CD8-positive, alpha-beta T cell (primary cell): ENCODE measurements at regions of chr6 and their contacts with region 1.

Region 1: DNA sequence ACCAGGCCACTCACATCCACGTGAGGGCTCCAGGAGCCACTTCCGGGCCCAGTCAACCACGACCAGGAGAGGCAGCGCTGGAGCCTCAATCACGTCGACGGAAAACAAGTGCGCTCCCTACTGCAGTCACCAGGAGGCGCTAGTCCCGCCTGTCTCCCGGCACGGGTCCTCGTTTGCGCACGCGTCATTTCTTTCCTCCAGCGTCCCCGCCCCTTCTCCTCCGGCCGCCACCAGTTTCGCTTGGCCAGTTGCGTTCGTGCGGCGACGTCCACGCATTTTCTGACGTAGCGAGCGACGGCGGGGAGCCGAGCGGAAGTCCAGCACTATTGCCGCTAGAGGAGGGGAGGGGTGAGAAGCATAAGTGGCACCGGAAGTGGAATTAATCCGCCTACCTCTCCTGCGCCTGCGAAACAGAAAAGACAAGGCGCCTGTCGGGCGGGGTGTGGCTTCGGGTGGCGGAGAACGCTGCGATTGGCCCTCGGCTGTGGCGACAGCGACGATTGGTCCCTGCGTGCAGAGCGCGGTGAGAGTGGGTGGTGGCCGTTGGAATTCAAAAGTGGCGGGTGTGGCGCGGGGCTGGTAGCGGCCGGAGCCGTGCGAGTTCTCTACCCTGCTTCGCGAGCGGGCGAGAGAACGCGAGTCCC is at the start of gene KIFC1:
- DNase-seq: peak; percentile 98 to 100 (median 99)
- ATAC-seq: peak; percentile 87
- H3K4me3 ChIP-seq: peak within 1 kb of the TSS; percentile 57 to 61
- H3K4me3 Mint-ChIP-seq: peak within 1 kb of the TSS; percentile 85
- H3K27ac ChIP-seq: peak within 1 kb of the TSS; percentile 68 to 88
- H3K27ac Mint-ChIP-seq: peak within 1 kb of the TSS; percentile 97
- H3K4me1 ChIP-seq: peaks cover 18% of the 10 kb centered on the region
- H3K4me1 Mint-ChIP-seq: peaks cover 25% of the 10 kb centered on the region
- H3K27me3 ChIP-seq: no peaks in the 10 kb centered on the region
- H3K27me3 Mint-ChIP-seq: no peaks in the 10 kb centered on the region
- CTCF ChIP-seq: peak; percentile 86
- total RNA-seq, gene KIFC1: 1.6 to 2.1 TPM

Region 2: DNA sequence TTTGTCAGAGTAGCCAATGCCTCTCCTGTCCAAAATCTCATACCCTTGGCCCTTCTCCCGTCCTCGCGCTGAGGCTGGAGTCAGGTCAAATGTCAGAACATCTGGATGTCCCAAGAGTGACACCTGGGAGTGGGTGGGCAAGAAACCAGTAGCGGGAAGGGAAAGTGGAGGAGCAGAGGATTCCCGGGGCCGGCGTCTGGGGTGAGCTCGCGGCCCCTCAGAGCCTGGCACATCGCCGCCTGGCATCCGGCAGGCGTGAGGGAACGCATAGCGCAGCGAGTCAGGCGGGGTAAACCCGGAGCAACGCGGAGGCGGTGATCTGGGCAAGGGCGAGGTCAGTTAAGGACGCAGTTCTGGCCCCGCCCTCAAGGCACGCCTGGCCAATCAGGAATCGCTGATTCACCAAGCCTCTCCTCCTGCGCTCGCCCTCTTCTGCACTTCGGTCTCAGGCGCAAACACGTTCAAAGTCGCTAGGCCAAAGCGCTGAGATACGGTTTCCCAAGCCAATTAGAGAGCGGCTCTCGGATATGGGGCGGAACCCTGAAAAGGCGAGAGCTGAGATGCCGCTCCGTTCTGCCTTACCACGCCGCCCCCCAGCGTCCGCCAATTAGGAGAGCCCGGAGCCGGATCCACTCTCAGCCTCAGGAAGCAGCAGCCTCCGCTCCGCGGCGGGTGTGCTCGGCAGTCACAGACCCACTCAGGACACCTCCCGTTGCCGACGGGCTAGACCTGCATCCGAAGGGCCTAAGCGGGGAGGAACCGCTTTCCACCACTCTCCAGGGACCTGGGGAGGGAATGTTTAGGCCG is 142.3 kb before region 1 on chr6:
- CTCF ChIA-PET with region 1: no interaction called
- POLR2A ChIA-PET with region 1: no interaction called
- intact Hi-C with region 1: loop called in 1 of 2 experiments (anchors 1 kb)
- DNase-seq: peak; percentile 90 to 100 (median 95)
- ATAC-seq: peak; percentile 85
- H3K4me3 ChIP-seq: peak overlapping the region; percentile 66 to 71
- H3K4me3 Mint-ChIP-seq: peak overlapping the region; percentile 91
- H3K27ac ChIP-seq: peak overlapping the region; percentile 85 to 98
- H3K27ac Mint-ChIP-seq: peak overlapping the region; percentile 93
- H3K4me1 ChIP-seq: peaks cover 25% of the 10 kb centered on the region
- H3K4me1 Mint-ChIP-seq: peaks cover 38% of the 10 kb centered on the region
- H3K27me3 ChIP-seq: peaks cover 0 to 3% of the 10 kb centered on the region in 2 experiments
- H3K27me3 Mint-ChIP-seq: no peaks in the 10 kb centered on the region
- CTCF ChIP-seq: no peak

Region 3: GRCh38 chr6:33344701-33345697 is 46.4 kb before region 1 on chr6:
- CTCF ChIA-PET with region 1: interaction called, 7 read pairs
- POLR2A ChIA-PET with region 1: interaction called, 7 read pairs
- intact Hi-C with region 1: loop called (anchors 1 kb)
- DNase-seq: peak; percentile 33 to 94 (median 70)
- ATAC-seq: peak; percentile 58
- H3K4me3 ChIP-seq: peak overlapping the region; percentile 40 to 53
- H3K4me3 Mint-ChIP-seq: peak overlapping the region; percentile 82
- H3K27ac ChIP-seq: peak overlapping the region; percentile 75 to 95
- H3K27ac Mint-ChIP-seq: peak overlapping the region; percentile 94
- H3K4me1 ChIP-seq: peaks cover 32% of the 10 kb centered on the region
- H3K4me1 Mint-ChIP-seq: peaks cover 42% of the 10 kb centered on the region
- H3K27me3 ChIP-seq: no peaks in the 10 kb centered on the region
- H3K27me3 Mint-ChIP-seq: no peaks in the 10 kb centered on the region
- CTCF ChIP-seq: peak; percentile 72

Region 4: GRCh38 chr6:33430991-33431879 is 39.8 kb after region 1 on chr6:
- CTCF ChIA-PET with region 1: interaction called, 13 read pairs
- POLR2A ChIA-PET with region 1: interaction called, 12 read pairs
- intact Hi-C with region 1: loop called (anchors 1 kb)
- DNase-seq: peak; percentile 77 to 93 (median 88)
- ATAC-seq: peak; percentile 59
- H3K4me3 ChIP-seq: peak overlapping the region; percentile 38 to 53
- H3K4me3 Mint-ChIP-seq: peak overlapping the region; percentile 93
- H3K27ac ChIP-seq: peak overlapping the region; percentile 53 to 81
- H3K27ac Mint-ChIP-seq: peak overlapping the region; percentile 94
- H3K4me1 ChIP-seq: peaks cover 56% of the 10 kb centered on the region
- H3K4me1 Mint-ChIP-seq: peaks cover 64% of the 10 kb centered on the region
- H3K27me3 ChIP-seq: no peaks in the 10 kb centered on the region
- H3K27me3 Mint-ChIP-seq: no peaks in the 10 kb centered on the region
- CTCF ChIP-seq: no peak

Region 5: DNA sequence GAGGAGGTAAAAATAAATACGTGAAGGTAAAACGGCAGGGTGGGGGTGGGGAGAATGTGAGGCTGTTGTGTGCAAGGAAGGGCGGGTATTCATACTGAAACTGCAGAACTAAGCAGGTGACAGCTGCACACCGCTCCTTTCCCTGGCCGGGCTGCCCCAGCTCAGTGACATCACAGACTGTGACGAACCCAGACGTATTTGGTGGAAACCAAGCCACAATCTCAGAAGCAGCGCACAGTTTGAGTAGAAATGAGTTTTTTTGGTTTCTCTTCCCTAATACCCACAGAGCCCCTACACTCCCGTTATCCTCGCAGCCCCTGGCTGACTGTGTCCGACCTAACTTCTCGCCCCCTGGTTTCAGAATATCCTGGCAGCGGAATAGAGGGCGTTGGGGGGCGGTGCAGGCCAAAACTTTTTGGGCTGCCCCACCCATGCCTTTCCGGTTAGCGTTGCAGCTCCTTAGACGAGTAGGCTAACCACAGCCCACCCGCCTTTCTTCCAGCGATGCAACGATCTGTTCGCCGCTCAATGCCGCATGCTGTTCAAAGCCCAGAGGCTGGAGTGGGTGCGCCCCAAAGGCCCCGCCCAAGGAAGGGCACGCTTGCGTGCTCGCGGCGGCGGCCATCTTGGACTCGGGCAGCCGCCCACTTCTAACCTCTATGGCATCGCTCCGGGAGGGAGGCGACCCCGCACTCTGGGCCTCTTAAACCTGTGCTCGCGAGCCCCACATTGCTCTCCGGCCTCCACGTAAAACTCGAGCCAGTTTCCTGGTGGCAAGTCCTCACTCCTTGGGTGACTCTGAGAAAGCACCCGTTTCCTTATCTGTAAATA is 179.6 kb after region 1 on chr6:
- CTCF ChIA-PET with region 1: no interaction called
- POLR2A ChIA-PET with region 1: interaction called, 3 read pairs
- intact Hi-C with region 1: loop called (anchors 1 kb)
- DNase-seq: peak; percentile 86 to 98 (median 92)
- ATAC-seq: peak; percentile 86
- H3K4me3 ChIP-seq: peak overlapping the region; percentile 57 to 67
- H3K4me3 Mint-ChIP-seq: peak overlapping the region; percentile 92
- H3K27ac ChIP-seq: peak overlapping the region; percentile 93 to 99
- H3K27ac Mint-ChIP-seq: peak overlapping the region; percentile 100
- H3K4me1 ChIP-seq: peaks cover 20% of the 10 kb centered on the region
- H3K4me1 Mint-ChIP-seq: peaks cover 29% of the 10 kb centered on the region
- H3K27me3 ChIP-seq: no peaks in the 10 kb centered on the region
- H3K27me3 Mint-ChIP-seq: no peaks in the 10 kb centered on the region
- CTCF ChIP-seq: no peak

Region 6: DNA sequence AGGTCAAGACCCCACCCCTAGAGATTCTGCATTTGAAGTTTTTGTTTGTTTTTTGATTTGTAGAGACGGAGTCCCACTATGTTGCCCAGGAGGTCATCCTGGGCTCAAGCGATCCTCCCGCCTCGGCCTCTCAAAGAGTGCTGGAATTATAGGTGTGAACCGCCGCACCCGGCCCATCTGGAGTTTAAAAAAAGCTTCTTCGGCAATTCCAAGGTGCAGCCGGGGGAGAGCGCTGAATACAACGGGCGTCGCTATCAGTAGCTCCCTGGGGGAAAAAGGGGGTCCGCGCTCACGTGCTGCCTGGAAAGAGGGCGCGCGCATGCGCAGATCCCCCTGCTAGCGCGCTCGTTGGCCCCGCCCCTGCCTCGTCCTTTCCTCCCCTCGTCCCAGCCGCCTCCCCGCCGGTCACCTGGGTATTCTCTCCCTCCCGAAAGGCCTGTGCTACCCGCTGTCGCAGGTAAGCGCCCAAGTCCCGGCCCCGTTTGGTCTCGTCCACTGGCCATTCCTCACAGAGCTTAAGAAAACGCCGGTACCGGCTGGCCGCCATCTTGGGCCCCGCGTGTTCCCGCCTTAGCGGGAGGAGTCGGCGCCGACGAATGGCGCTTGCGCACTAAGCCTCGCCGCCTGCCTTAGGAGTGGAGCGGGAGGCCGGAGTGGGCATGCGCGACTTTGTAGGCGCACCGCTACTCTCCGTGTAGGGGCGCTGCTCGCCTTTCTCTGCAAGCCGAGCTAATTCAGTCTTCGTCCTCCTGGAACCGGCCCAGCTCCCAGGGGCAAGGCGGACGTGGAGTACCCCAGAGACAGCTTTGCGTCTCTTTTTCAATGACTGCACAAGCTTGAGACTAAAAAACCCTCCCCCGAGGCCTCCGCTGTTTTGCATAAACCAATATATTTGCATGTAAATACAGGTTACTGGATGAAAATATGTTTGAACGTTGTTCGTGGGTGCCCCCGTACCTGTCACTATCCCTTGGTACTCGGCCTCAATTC is 320.0 kb after region 1 on chr6 and contains the start of gene UQCC2:
- CTCF ChIA-PET with region 1: interaction called, 3 read pairs
- POLR2A ChIA-PET with region 1: no interaction called
- intact Hi-C with region 1: loop called in 1 of 2 experiments (anchors 1 kb)
- DNase-seq: peak; percentile 93 to 99 (median 97)
- ATAC-seq: peak; percentile 96
- H3K4me3 ChIP-seq: peak within 1 kb of the TSS; percentile 79 to 96
- H3K4me3 Mint-ChIP-seq: peak within 1 kb of the TSS; percentile 98
- H3K27ac ChIP-seq: peak within 1 kb of the TSS; percentile 71 to 88
- H3K27ac Mint-ChIP-seq: peak within 1 kb of the TSS; percentile 96
- H3K4me1 ChIP-seq: peaks cover 19% of the 10 kb centered on the region
- H3K4me1 Mint-ChIP-seq: peaks cover 36% of the 10 kb centered on the region
- H3K27me3 ChIP-seq: no peaks in the 10 kb centered on the region
- H3K27me3 Mint-ChIP-seq: no peaks in the 10 kb centered on the region
- CTCF ChIP-seq: peak; percentile 59
- total RNA-seq, gene UQCC2: 6.2 to 6.8 TPM